T-cell (primary cell): ENCODE measurements at regions of chr6 and their contacts with region 1.

Region 1: GRCh38 chr6:131146865-131147264 is 11.6 kb downstream of the AKAP7 start:
- DNase-seq: no peak
- ATAC-seq: no peak
- H3K4me3 ChIP-seq: no peak overlapping the region
- H3K4me3 Mint-ChIP-seq: no peak overlapping the region
- H3K27ac ChIP-seq: no peak overlapping the region
- H3K27ac Mint-ChIP-seq: no peak overlapping the region
- H3K4me1 ChIP-seq: no peaks in the 10 kb centered on the region
- H3K4me1 Mint-ChIP-seq: no peaks in the 10 kb centered on the region
- H3K27me3 ChIP-seq: no peaks in the 10 kb centered on the region
- H3K27me3 Mint-ChIP-seq: no peaks in the 10 kb centered on the region

Region 2: DNA sequence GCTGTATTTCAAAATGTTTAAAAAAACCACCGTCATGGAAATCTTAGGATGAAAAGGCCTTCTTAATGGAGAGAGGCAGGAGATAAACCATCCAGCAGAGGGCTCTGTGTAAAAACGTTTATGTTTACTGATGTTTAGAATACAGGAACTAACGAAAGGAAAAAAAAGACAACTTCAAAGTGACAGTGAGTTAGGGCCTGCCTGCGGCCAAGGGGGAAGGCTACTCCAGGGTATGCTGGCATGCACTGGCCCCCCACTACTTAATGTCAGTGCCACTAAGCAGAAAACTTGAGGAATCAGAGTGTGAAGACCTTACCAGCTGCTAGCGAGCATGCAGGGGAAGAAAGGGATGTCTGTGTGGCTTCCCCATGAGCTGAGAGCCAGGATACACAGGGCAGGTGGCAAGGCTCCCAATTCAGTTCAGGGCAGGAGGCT is 36.1 kb after region 1 on chr6:
- CTCF ChIA-PET with region 1: interaction called in 1 of 2 experiments, 3 read pairs
- POLR2A ChIA-PET with region 1: interaction called in 1 of 2 experiments, 11 read pairs
- DNase-seq: peak in 22 of 35 experiments; percentile 4 to 57 (median 20)
- ATAC-seq: peak; percentile 63 to 89 (median 78)
- H3K4me3 ChIP-seq: no peak overlapping the region
- H3K4me3 Mint-ChIP-seq: peak overlapping the region; percentile 53 to 73 (median 70)
- H3K27ac ChIP-seq: no peak overlapping the region
- H3K27ac Mint-ChIP-seq: peak overlapping the region; percentile 93 to 96
- H3K4me1 ChIP-seq: peaks cover 4 to 11% of the 10 kb centered on the region in 2 experiments
- H3K4me1 Mint-ChIP-seq: peaks cover 8 to 12% (median 11%) of the 10 kb centered on the region in 3 donors
- H3K27me3 ChIP-seq: no peaks in the 10 kb centered on the region
- H3K27me3 Mint-ChIP-seq: no peaks in the 10 kb centered on the region